ENCODE measurements at regions of chr18 and their contacts with region 1.

Region 1: GRCh38 chr18:67618066-67618465 is 101.5 kb upstream of the DSEL start:
- DNase-seq: no peak
- ATAC-seq: no peak
- H3K4me3 ChIP-seq: no peak overlapping the region
- H3K27ac ChIP-seq: no peak overlapping the region
- H3K4me1 ChIP-seq: peaks cover 0 to 7% (median 0%) of the 10 kb centered on the region in 3 donors
- H3K27me3 ChIP-seq: no peaks in the 10 kb centered on the region
- CTCF ChIP-seq: no peak

Region 2: GRCh38 chr18:67428805-67429204 is 189.3 kb before region 1 on chr18:
- intact Hi-C with region 1: no loop called
- DNase-seq: no peak
- ATAC-seq: no peak
- H3K4me3 ChIP-seq: no peak overlapping the region
- H3K27ac ChIP-seq: no peak overlapping the region
- H3K4me1 ChIP-seq: no peaks in the 10 kb centered on the region
- H3K27me3 ChIP-seq: no peaks in the 10 kb centered on the region
- CTCF ChIP-seq: no peak

Region 3: DNA sequence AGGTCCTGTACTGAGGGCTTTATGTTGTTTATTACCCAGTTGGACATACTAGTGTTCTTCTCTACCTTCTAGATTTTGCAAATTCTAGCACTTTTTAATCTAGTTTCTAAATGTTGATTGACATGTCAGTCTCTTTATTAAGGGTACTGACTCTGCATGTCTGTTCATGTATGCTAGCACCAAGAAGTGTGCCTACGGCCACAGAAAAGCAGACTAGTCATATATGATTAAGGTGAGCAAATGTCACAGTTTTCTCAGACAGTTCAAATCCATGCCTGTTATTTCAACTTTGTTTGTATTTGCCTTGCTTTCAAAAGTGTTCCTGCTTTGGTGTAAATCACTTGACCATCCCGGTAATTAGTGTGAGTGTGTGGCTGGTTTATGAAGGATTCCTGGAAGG is 43.5 kb after region 1 on chr18:
- intact Hi-C with region 1: no loop called
- DNase-seq: no peak
- ATAC-seq: no peak
- H3K4me3 ChIP-seq: no peak overlapping the region
- H3K27ac ChIP-seq: no peak overlapping the region
- H3K4me1 ChIP-seq: no peaks in the 10 kb centered on the region
- H3K27me3 ChIP-seq: no peaks in the 10 kb centered on the region
- CTCF ChIP-seq: no peak

Region 4: DNA sequence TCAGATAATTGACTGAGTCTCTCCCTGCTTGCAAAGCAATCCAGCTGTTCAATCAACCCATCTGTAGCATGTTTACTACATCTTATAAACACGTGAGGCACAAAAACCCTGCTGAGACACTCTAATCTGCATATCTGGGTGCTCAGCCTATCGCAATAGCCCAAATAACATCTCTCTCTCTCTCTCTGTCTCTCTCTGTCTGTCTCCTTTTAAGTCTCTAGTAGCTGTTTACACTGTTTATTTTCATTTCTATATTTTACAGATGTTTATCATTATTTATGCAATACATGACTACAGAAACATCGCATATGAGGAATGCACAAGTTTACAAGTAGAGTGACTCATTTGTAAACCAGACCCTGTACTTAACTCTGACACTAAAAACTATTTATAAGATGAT is 320.6 kb after region 1 on chr18:
- intact Hi-C with region 1: loop called in 1 of 3 experiments (anchors 10 kb)
- DNase-seq: no peak
- ATAC-seq: no peak
- H3K4me3 ChIP-seq: no peak overlapping the region
- H3K27ac ChIP-seq: no peak overlapping the region
- H3K4me1 ChIP-seq: no peaks in the 10 kb centered on the region
- H3K27me3 ChIP-seq: no peaks in the 10 kb centered on the region
- CTCF ChIP-seq: no peak